ENCODE measurements at regions of chr21 and their contacts with region 1.

Region 1: GRCh38 chr21:17512253-17513213 is at the start of gene CXADR:
- DNase-seq: peak; percentile 69 to 86 (median 80)
- ATAC-seq: peak; percentile 79 to 96 (median 91)
- H3K4me3 ChIP-seq: peak within 1 kb of the TSS; percentile 47 to 94 (median 69)
- H3K27ac ChIP-seq: peak within 1 kb of the TSS; percentile 78 to 92 (median 86)
- H3K4me1 ChIP-seq: peaks cover 0 to 21% (median 5%) of the 10 kb centered on the region in 12 donors
- H3K27me3 ChIP-seq: peaks cover 0 to 54% (median 10%) of the 10 kb centered on the region in 9 donors
- CTCF ChIP-seq: peak in 11 of 12 donors; percentile 32 to 63 (median 53)
- POLR2A ChIP-seq: peak; percentile 40 to 62
- total RNA-seq, gene CXADR: 18.4 to 45.1 (median 33.2) TPM

Region 2: GRCh38 chr21:15722594-15723324 is 1789.8 kb before region 1 on chr21:
- intact Hi-C with region 1: no loop called
- DNase-seq: no peak
- ATAC-seq: no peak
- H3K4me3 ChIP-seq: no peak overlapping the region
- H3K27ac ChIP-seq: no peak overlapping the region
- H3K4me1 ChIP-seq: no peaks in the 10 kb centered on the region
- H3K27me3 ChIP-seq: no peaks in the 10 kb centered on the region
- CTCF ChIP-seq: no peak
- POLR2A ChIP-seq: no peak

Region 3: DNA sequence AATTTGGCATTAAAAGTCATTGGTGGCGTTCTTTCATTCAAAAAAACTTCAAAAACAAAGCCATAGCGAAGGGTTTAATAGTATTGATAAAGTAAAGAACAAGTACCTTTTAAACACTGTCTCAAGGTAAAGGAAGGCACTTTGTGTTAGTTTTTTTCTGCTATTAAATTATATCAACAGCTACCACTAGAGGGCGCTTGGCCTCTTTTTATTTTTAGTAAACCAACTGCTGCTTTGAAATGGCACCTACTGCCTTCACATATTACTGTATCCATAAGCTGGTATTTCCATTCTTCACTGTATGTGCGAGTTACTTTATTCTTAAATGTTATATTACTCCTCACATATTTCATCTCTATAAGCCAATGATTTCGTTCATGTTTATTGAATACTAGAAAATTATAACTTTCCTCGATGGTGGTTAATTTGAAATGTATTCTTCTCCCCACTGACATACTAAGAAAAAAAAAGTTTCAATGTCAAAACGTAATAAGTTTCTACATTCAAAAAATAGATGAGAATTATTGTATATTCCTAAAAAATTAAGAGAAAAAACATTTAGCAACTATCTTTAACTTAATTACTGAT is 125.4 kb before region 1 on chr21:
- intact Hi-C with region 1: loop called in 3 of 10 experiments (anchors 5 to 10 kb)
- DNase-seq: peak in 2 of 5 donors; percentile 24 to 25
- ATAC-seq: peak in 2 of 4 donors; percentile 52 to 55
- H3K4me3 ChIP-seq: no peak overlapping the region
- H3K27ac ChIP-seq: no peak overlapping the region
- H3K4me1 ChIP-seq: no peaks in the 10 kb centered on the region
- H3K27me3 ChIP-seq: no peaks in the 10 kb centered on the region
- CTCF ChIP-seq: peak; percentile 58 to 88 (median 80)
- POLR2A ChIP-seq: no peak

Region 4: GRCh38 chr21:17461014-17461413 is 51.5 kb before region 1 on chr21:
- intact Hi-C with region 1: loop called in 6 of 10 experiments (anchors 5 to 10 kb)
- DNase-seq: peak in 4 of 5 donors; percentile 61 to 70 (median 68)
- ATAC-seq: peak; percentile 93 to 96 (median 95)
- H3K4me3 ChIP-seq: no peak overlapping the region
- H3K27ac ChIP-seq: peak overlapping the region; percentile 18 to 81 (median 72)
- H3K4me1 ChIP-seq: peaks cover 0 to 28% (median 9%) of the 10 kb centered on the region in 12 donors
- H3K27me3 ChIP-seq: no peaks in the 10 kb centered on the region
- CTCF ChIP-seq: no peak
- POLR2A ChIP-seq: no peak

Region 5: DNA sequence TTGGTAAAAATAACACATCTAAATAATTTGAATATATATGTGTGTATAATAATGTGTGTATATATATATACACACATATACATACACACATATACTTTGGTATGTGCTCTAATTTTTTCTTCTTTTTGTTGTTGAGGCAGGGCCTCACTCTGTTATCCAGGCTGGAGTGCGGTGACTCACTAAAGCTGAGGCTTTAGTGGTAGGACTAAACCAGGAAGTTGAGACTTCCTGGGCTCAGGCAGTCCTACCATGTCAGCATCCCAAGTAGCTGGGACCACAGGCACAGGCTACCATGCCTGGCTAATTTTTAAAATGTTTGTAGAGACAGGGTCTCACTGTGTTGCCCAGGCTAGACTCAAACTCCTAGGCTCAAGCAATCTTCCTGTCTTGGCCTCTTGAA is 46.4 kb before region 1 on chr21:
- intact Hi-C with region 1: loop called in 6 of 10 experiments (anchors 5 to 10 kb)
- DNase-seq: no peak
- ATAC-seq: peak in 1 of 4 donors; percentile 16
- H3K4me3 ChIP-seq: no peak overlapping the region
- H3K27ac ChIP-seq: no peak overlapping the region
- H3K4me1 ChIP-seq: peaks cover 0 to 18% (median 7%) of the 10 kb centered on the region in 12 donors
- H3K27me3 ChIP-seq: no peaks in the 10 kb centered on the region
- CTCF ChIP-seq: no peak
- POLR2A ChIP-seq: no peak

Region 6: GRCh38 chr21:17539743-17540341 is 27.3 kb after region 1 on chr21:
- intact Hi-C with region 1: loop called in 3 of 10 experiments (anchors 2 to 5 kb)
- DNase-seq: no peak
- ATAC-seq: peak in 2 of 4 donors; percentile 34 to 36
- H3K4me3 ChIP-seq: no peak overlapping the region
- H3K27ac ChIP-seq: peak overlapping the region in 3 of 12 donors; percentile 17 to 52 (median 44)
- H3K4me1 ChIP-seq: peaks cover 0 to 29% (median 10%) of the 10 kb centered on the region in 12 donors
- H3K27me3 ChIP-seq: no peaks in the 10 kb centered on the region
- CTCF ChIP-seq: no peak
- POLR2A ChIP-seq: no peak

Region 7: GRCh38 chr21:17548262-17548661 is 35.7 kb after region 1 on chr21:
- intact Hi-C with region 1: loop called in 2 of 10 experiments (anchors 5 kb)
- DNase-seq: peak in 2 of 5 donors; percentile 17 to 46
- ATAC-seq: peak; percentile 82 to 91 (median 90)
- H3K4me3 ChIP-seq: no peak overlapping the region
- H3K27ac ChIP-seq: peak overlapping the region in 5 of 12 donors; percentile 0 to 37 (median 3)
- H3K4me1 ChIP-seq: peaks cover 0 to 8% (median 0%) of the 10 kb centered on the region in 12 donors
- H3K27me3 ChIP-seq: no peaks in the 10 kb centered on the region
- CTCF ChIP-seq: no peak
- POLR2A ChIP-seq: no peak

Measured in heart left ventricle (tissue), 16 donors.